ENCODE measurements at regions of chr13 and their contacts with region 1.

Region 1: DNA sequence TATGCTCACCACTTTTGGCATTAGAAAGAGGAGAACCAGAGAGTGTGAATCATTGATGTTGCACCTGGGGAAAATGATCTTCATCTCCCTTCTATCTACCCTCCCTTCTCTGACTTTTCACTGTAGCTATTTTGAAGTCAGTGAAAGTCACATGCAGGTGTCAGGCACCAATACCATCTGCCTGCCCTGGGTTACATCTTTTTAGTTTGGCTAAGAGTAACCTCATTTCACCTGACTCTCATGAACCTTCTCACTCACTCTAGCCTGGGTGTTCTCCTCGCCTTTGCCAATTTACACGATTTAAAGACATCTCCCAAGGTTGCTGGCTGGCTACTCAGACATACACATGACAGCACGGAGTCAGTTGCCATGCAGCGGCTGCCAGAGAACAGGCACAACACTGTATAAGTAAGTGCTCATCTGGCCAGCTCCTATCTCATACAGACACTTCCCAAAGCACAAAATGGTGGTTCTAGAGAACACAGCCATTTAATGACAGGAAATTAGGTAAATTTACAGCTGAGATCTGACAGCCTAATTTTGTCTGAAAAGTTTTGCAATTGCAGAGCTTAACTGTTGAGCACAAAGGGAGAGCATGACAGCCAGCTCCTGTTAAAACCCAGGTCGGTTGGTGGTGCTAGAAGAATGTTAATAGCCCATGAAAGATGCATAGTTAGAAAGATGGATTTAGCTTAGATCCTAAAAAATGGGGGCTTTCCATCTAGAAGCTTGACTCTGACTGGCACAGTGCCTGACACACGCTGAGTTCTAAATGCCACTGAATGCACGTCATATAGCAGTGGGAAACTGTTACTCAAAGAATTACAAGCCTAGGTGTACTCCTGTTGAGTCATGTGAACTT is 32.5 kb downstream of the LCP1 start:
- DNase-seq: no peak
- H3K4me3 ChIP-seq: no peak overlapping the region
- H3K27ac ChIP-seq: no peak overlapping the region
- H3K27me3 ChIP-seq: no peaks in the 10 kb centered on the region
- CTCF ChIP-seq: no peak

Region 2: DNA sequence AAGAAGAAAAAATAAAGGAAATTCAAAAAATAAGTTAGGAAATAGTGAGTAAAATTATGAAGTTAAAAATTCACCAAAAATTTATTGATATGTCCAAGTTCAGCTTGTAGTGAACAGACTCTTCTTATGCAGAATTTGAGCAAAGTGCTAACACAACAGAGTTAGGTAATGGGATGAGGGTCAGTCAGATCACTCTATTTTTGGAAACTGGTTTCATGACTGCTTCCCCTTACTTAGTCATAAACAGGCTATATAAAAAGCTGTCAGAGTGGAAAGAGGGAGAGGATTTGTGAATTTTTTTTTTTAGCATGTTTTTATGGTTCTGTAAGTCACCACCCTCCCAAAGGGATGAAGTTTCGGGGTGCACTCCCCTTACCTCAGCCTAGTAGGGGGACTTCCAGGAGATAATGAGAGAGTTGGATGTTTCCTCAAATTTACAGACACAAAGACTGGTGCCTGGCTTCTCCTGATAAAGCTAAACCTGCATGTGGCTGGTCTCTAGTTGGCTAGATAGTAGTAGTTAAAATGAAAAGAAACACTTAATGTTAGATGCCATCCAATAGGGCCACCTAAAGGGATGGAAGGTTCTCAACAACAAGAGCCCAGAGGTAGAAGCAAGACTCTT is 49.2 kb before region 1 on chr13:
- intact Hi-C with region 1: no loop called
- DNase-seq: no peak
- H3K4me3 ChIP-seq: no peak overlapping the region
- H3K27ac ChIP-seq: peak overlapping the region in 48 of 59 donors; percentile 9 to 94 (median 80)
- H3K27me3 ChIP-seq: no peaks in the 10 kb centered on the region
- CTCF ChIP-seq: no peak

Region 3: GRCh38 chr13:46295491-46296114 is 146.1 kb after region 1 on chr13:
- intact Hi-C with region 1: loop called in 1 of 2 experiments (anchors 10 kb)
- DNase-seq: peak in 1 of 10 donors; percentile 49
- H3K4me3 ChIP-seq: no peak overlapping the region
- H3K27ac ChIP-seq: peak overlapping the region in 25 of 59 donors; percentile 3 to 69 (median 48)
- H3K27me3 ChIP-seq: peaks cover 0 to 8% (median 0%) of the 10 kb centered on the region in 45 donors
- CTCF ChIP-seq: no peak